Ascending aorta (tissue), 2 donors: ENCODE measurements at regions of chrX and their contacts with region 1.

Region 1: GRCh38 chrX:47193475-47194193 is at the start of gene UBA1:
- DNase-seq: peak; percentile 92 to 99
- H3K4me3 ChIP-seq: peak within 1 kb of the TSS; percentile 72 to 99
- H3K27ac ChIP-seq: peak within 1 kb of the TSS; percentile 95 to 99
- H3K4me1 ChIP-seq: peaks cover 12 to 24% of the 10 kb centered on the region in 2 donors
- H3K27me3 ChIP-seq: no peaks in the 10 kb centered on the region
- CTCF ChIP-seq: peak; percentile 86 to 93 (median 90)
- total RNA-seq, gene UBA1: 162 TPM

Region 2: DNA sequence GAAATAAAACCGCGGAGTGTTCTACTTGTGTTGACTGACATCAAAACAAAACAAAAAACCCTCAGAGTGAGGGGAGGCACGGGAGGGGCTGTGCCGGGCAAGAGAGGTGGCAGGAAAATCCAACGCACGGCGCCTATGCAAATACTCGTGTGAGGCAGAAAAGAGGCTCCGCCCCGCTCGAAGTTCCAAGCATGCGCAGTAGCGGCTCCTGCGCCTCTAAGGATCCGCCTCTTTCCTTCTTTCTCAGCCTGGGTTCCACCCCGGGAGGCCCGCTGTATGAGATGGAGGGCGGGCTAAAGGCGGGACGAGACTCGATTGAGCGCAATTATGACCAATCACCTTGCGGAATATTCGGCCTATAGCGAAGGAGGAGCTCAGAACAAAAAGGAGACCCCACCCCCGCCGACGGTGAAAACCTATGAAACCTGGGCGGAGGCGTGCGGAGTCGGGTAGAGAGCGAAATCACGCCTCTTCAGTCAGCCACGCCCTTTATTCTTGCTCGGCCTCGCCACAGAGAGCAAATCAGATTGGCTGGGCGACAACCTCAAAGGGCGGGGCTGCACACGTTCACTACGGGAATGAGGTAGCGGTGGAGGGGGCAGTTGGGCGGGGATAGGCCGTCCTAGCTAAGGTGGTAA is 24.1 kb after region 1 on chrX:
- intact Hi-C with region 1: loop called (anchors 1 kb)
- DNase-seq: peak; percentile 98 to 100
- H3K4me3 ChIP-seq: peak overlapping the region; percentile 87 to 92
- H3K27ac ChIP-seq: peak overlapping the region; percentile 95 to 97
- H3K4me1 ChIP-seq: peaks cover 3 to 14% of the 10 kb centered on the region in 2 donors
- H3K27me3 ChIP-seq: no peaks in the 10 kb centered on the region
- CTCF ChIP-seq: no peak

Region 3: GRCh38 chrX:47361538-47362511 is 168.2 kb after region 1 on chrX:
- intact Hi-C with region 1: loop called (anchors 5 kb)
- DNase-seq: peak; percentile 74 to 91
- H3K4me3 ChIP-seq: peak overlapping the region; percentile 45 to 57
- H3K27ac ChIP-seq: peak overlapping the region; percentile 51 to 58
- H3K4me1 ChIP-seq: no peaks in the 10 kb centered on the region
- H3K27me3 ChIP-seq: no peaks in the 10 kb centered on the region
- CTCF ChIP-seq: peak in 1 of 3 experiments; percentile 19

Region 4: DNA sequence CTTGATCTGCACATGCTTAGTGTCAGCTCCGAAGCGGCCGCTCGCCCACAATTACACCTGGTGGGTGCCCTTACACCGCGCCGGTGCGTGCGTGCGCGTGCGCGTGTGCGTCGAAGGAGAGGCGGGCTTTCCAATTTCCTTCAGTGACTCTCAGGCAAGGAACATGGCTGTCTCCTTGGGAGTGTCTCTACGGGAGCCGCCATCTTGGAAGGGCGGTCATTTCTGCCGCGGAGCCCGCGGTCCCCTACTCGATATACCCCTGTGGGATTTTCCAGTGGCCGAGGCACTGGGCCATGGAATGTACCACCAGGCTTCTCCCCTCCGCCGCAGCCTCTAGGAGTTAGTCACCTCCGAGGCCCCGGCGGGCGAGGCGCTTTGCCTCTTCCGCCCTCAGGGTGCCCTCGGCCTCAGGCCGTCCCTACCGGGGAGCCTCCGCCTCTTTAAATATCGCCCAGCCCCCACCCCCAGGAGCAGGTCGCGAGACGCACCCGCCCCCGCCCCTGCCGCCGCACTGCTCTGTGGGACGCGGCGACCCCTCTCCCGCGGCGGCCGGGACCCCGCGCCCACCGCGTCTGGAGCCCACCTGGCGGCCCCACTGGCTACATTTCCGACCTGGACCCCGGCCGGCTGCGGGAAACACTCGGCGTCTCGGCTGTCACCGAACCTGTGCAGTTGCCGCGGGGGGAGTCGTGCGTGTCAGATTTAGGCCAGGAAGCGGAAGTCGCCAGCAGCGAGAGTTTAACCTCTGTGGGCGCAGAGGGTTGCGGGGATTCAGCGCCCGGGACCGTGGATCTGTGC is 289.1 kb after region 1 on chrX and contains the start of gene ZNF41:
- intact Hi-C with region 1: loop called (anchors 5 kb)
- DNase-seq: peak; percentile 18 to 82
- H3K4me3 ChIP-seq: peak within 1 kb of the TSS; percentile 58 to 77
- H3K27ac ChIP-seq: peak within 1 kb of the TSS; percentile 93 to 94
- H3K4me1 ChIP-seq: no peaks in the 10 kb centered on the region
- H3K27me3 ChIP-seq: no peaks in the 10 kb centered on the region
- CTCF ChIP-seq: no peak
- total RNA-seq, gene ZNF41: 2.7 TPM